Endothelial cell of umbilical vein (primary cell): ENCODE measurements at regions of chr2 and their contacts with region 1.

Region 1: DNA sequence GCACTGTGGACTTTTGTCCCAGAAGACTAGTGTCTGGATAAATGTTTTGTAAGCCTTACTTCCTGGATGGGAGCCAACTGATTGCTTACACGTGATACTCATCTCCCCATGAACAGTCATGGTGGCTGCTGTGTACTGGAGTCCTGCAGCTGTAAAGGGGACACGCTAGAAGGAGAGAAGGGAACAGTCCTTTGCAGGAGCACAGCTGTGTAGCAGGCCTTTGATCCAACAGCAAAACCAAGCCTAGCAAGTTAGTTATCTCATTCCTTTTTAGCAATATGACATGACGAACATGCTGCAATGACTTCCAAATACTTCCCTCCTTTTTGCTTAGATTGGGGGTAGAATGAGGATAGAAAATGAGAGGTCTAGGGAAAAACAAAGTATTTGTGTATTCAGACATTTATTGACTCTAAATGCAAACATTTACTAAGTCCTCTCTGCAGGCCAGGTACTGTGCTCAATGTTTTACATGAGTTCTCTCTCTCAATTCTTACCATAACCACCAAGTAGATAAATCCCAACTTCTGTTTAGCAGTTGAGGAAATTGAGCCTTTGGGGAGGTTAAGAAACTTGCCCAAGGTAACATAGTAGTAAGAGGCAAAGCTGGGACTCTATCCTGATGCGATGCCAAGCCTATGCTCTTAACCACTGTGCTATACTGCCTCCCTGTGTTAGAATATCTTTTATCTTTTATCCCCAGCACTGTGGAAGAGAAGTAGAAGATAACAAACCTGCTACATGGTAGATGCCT is 55.4 kb upstream of the CD28 start:
- DNase-seq: peak; percentile 53
- H3K4me3 ChIP-seq: no peak overlapping the region
- H3K27ac ChIP-seq: no peak overlapping the region
- H3K4me1 ChIP-seq: no peaks in the 10 kb centered on the region
- H3K27me3 ChIP-seq: no peaks in the 10 kb centered on the region
- CTCF ChIP-seq: peak in 1 of 2 donors; percentile 4
- POLR2A ChIP-seq: no peak

Region 2: GRCh38 chr2:202577250-202578183 is 1073.5 kb before region 1 on chr2:
- CTCF ChIA-PET with region 1: no interaction called
- POLR2A ChIA-PET with region 1: no interaction called
- dilution Hi-C with region 1: no loop called
- intact Hi-C with region 1: loop called (anchors 5 kb)
- DNase-seq: no peak
- H3K4me3 ChIP-seq: no peak overlapping the region
- H3K27ac ChIP-seq: no peak overlapping the region
- H3K4me1 ChIP-seq: no peaks in the 10 kb centered on the region
- H3K27me3 ChIP-seq: no peaks in the 10 kb centered on the region
- CTCF ChIP-seq: no peak
- POLR2A ChIP-seq: no peak

Region 3: GRCh38 chr2:203484266-203485112 is 166.5 kb before region 1 on chr2:
- CTCF ChIA-PET with region 1: no interaction called
- POLR2A ChIA-PET with region 1: no interaction called
- dilution Hi-C with region 1: no loop called
- intact Hi-C with region 1: loop called (anchors 5 kb)
- DNase-seq: peak; percentile 45
- H3K4me3 ChIP-seq: no peak overlapping the region
- H3K27ac ChIP-seq: no peak overlapping the region
- H3K4me1 ChIP-seq: no peaks in the 10 kb centered on the region
- H3K27me3 ChIP-seq: no peaks in the 10 kb centered on the region
- CTCF ChIP-seq: peak; percentile 23 to 51
- POLR2A ChIP-seq: no peak

Region 4: DNA sequence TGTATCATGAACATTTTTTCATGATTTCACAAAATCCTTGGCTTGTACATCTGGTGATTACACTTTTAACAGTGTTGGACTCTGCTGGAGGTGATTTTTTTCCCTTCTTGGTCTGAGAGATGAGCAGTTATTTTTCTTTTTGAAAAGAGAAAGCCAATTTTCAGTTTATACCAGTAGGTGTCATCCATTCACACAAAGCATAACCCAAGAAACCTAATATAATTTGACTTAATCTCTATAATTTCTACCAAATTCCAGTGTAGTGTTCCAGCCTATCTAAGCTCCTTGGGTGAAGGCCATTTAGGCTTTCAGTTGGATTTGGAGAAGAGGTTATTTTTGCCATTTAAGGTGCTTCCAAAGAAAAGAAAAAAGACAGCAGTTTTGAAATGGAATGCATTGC is 277.8 kb after region 1 on chr2:
- CTCF ChIA-PET with region 1: no interaction called
- POLR2A ChIA-PET with region 1: no interaction called
- dilution Hi-C with region 1: no loop called
- intact Hi-C with region 1: no loop called
- DNase-seq: peak; percentile 34
- H3K4me3 ChIP-seq: no peak overlapping the region
- H3K27ac ChIP-seq: no peak overlapping the region
- H3K4me1 ChIP-seq: no peaks in the 10 kb centered on the region
- H3K27me3 ChIP-seq: peaks cover 0 to 11% of the 10 kb centered on the region in 2 experiments
- CTCF ChIP-seq: peak in 1 of 2 donors; percentile 27
- POLR2A ChIP-seq: no peak